ENCODE measurements at regions of chr2 and their contacts with region 1.

Region 1: GRCh38 chr2:169584005-169584877 is at the start of gene PPIG:
- DNase-seq: peak; percentile 96
- H3K4me3 ChIP-seq: peak within 1 kb of the TSS; percentile 62 to 83 (median 72)
- H3K27ac ChIP-seq: peak within 1 kb of the TSS; percentile 91 to 98 (median 96)
- H3K4me1 ChIP-seq: peaks cover 0 to 31% (median 20%) of the 10 kb centered on the region in 4 donors
- H3K27me3 ChIP-seq: no peaks in the 10 kb centered on the region
- CTCF ChIP-seq: no peak
- EP300 ChIP-seq: peak in 3 of 4 donors; percentile 10 to 61 (median 56)
- POLR2A ChIP-seq: peak; percentile 53 to 67
- total RNA-seq, gene PPIG: 41.3 to 54.0 (median 45.7) TPM

Region 2: DNA sequence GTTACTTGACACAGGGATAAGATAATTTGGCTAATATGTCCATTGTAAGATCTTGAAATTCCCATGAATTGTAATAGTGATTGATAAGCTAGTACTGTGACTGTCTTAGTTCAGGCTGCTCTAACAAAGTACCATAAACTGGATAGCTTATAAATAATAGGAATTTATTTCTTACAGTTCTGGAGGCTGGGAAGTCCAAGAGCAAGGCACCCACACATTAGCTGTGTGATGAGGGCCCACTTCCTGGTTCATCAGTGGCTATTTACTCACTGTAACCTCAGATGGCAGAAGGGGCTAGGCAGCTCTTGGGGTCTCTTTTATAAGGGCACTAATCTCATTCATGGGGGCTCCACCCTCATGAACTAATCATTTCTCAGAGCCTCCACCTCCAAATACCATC is 753.3 kb before region 1 on chr2:
- intact Hi-C with region 1: no loop called
- DNase-seq: no peak
- H3K4me3 ChIP-seq: no peak overlapping the region
- H3K27ac ChIP-seq: no peak overlapping the region
- H3K4me1 ChIP-seq: no peaks in the 10 kb centered on the region
- H3K27me3 ChIP-seq: no peaks in the 10 kb centered on the region
- CTCF ChIP-seq: no peak
- EP300 ChIP-seq: no peak
- POLR2A ChIP-seq: no peak

Region 3: DNA sequence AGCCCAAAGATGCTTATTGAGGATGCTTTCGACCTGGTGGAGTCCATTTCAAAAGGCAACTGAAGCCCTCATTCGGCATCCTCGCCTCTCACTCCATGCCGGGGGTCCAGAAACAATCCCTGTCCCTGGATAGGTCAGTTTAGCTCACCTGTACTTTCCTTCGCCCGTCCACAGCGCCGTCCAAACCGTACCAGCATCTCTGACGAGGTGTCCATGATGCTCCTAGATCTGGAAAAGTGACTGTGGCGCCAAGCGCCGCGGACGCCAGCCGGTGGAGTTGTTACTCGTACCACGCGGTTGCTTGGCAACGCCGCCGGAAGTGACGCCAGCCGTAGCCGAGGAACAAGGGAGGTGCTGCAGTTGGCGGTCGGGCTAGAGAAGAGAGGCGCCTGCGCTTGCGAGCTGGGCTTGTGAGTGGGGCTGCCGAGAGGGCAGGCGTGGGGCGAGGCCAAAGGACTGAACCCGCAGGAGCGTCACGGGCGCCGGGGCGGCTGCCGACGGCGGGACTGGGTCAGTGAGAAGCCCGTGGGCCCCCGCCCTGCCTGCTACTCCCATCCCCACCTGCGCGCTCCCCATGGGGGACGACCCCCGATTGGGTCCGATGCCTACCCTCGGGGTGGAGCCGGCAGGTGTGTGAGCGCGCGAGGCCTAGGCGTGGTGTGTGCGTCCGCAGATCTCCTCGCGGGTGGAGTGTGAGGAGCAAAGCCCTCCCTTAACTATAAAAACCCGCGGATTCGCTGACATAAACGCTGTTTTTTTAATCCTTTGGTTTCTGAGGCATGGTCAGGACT is 110.1 kb after region 1 on chr2 and contains the starts of genes CFAP210 and PHOSPHO2:
- intact Hi-C with region 1: loop called (anchors 2 kb)
- DNase-seq: peak; percentile 100
- H3K4me3 ChIP-seq: peak within 1 kb of the TSS; percentile 81 to 89 (median 84)
- H3K27ac ChIP-seq: peak within 1 kb of the TSS; percentile 87 to 89 (median 88)
- H3K4me1 ChIP-seq: peaks cover 0 to 21% (median 13%) of the 10 kb centered on the region in 4 donors
- H3K27me3 ChIP-seq: no peaks in the 10 kb centered on the region
- CTCF ChIP-seq: peak in 1 of 4 experiments; percentile 9
- EP300 ChIP-seq: peak in 1 of 4 donors; percentile 32
- POLR2A ChIP-seq: peak; percentile 67 to 75
- total RNA-seq, gene CFAP210: not detected
- total RNA-seq, gene PHOSPHO2: 5.8 to 19.9 (median 14.3) TPM

Region 4: DNA sequence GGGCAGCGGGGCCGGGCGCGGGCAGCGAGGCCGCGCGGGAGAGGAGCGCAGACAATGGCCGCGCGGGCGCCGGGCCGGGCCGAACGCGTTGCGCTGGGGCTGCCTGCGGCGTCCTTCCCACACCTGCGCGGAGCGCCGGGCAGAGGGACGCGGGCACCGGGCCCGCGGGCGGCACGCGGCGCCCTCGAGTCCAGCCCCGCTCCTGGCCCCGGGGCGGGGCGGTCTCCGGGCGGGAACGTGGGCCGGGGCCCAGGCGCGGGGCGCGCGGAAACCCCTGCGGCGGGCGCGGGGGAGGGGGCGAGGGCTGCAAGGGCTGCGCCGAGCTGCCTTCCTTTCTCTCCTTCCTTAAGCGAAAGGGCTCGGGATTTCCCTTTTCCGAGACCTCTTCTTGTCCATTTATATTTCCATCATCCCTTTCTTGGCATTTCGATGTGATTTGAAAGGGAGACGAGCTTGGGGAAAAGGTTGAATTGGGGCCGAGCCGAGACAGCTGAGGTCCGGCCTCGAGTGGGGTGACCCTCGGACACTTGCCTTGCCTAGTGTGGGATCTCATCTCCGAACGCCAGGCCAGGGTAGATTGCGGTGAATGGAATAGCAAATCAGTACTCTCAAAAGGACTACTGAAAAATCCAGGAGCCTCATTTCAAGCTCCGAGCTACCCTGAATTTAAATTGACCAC is 150.1 kb after region 1 on chr2:
- intact Hi-C with region 1: loop called (anchors 2 kb)
- DNase-seq: no peak
- H3K4me3 ChIP-seq: peak overlapping the region; percentile 48 to 75 (median 72)
- H3K27ac ChIP-seq: peak overlapping the region; percentile 77 to 86 (median 80)
- H3K4me1 ChIP-seq: peaks cover 0 to 47% (median 33%) of the 10 kb centered on the region in 4 donors
- H3K27me3 ChIP-seq: no peaks in the 10 kb centered on the region
- CTCF ChIP-seq: no peak
- EP300 ChIP-seq: no peak
- POLR2A ChIP-seq: no peak

Region 5: GRCh38 chr2:169824373-169825333 is 240.4 kb after region 1 on chr2 and contains the start of gene METTL5:
- intact Hi-C with region 1: loop called (anchors 5 kb)
- DNase-seq: peak; percentile 88
- H3K4me3 ChIP-seq: peak within 1 kb of the TSS; percentile 83 to 89 (median 86)
- H3K27ac ChIP-seq: peak within 1 kb of the TSS; percentile 85 to 89 (median 86)
- H3K4me1 ChIP-seq: peaks cover 0 to 48% (median 29%) of the 10 kb centered on the region in 4 donors
- H3K27me3 ChIP-seq: no peaks in the 10 kb centered on the region
- CTCF ChIP-seq: peak; percentile 56 to 96 (median 79)
- EP300 ChIP-seq: no peak
- POLR2A ChIP-seq: peak in 1 of 2 donors; percentile 48
- total RNA-seq, gene METTL5: 51.5 to 337 (median 86.9) TPM

Region 6: DNA sequence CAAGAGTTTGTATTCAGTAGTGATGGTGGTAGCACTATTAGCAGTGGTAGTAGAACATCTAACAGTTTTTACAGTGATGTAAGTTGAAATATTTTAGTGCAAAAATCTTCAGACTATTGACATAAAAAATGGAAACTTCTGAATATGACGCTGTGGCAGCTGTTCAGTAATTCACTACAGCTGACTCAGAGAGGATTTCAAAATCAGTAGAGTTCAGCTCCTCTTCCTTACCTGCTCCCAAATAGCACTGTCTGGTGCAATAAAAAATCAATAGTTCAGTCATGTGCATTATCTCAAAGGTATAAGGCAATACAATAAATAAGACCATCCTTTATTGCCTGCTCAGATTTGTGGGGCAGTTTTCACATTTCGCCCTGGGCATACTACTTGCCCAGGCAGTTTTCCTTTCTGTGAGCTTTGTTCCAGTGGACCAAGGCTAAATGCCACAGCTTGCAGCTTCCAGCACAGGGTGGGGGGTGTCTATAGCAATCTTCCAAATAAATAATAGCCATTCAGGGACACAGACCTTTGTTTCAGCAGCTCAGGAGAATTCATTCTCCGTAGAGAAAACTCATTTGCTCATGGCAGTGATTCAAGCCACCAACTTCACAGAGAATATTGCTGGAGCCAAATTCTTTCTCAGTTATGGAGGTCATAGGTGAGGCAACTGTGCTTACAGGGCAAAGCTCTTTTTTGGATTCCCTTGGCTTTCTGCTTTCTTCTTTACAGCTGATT is 1310.9 kb after region 1 on chr2:
- intact Hi-C with region 1: no loop called
- DNase-seq: no peak
- H3K4me3 ChIP-seq: no peak overlapping the region
- H3K27ac ChIP-seq: no peak overlapping the region
- H3K4me1 ChIP-seq: no peaks in the 10 kb centered on the region
- H3K27me3 ChIP-seq: no peaks in the 10 kb centered on the region
- CTCF ChIP-seq: no peak
- EP300 ChIP-seq: no peak
- POLR2A ChIP-seq: no peak

Measured in sigmoid colon (tissue), 7 donors.